ENCODE measurements at regions of chr10 and their contacts with region 1.

Region 1: DNA sequence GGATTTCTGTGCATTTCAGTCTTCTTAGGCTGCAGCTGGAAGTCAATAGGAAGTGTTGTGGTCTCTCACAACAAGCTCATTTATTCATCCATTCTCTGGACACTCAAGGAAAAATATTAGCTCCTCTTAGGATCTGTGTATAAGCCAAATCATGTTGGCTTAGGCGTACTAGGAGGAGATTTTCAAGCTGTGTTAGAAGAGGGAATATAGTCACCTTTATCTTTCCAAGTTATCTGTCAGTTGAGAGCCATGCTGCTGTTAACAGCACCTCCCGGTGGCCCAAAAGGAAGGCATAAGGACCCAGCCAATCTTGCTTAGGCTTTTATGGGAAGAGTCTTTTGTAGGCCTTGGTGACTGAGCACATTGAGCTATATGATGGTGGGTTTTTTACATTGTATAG is 220.0 kb downstream of the LRMDA start:
- DNase-seq: no peak

Region 2: DNA sequence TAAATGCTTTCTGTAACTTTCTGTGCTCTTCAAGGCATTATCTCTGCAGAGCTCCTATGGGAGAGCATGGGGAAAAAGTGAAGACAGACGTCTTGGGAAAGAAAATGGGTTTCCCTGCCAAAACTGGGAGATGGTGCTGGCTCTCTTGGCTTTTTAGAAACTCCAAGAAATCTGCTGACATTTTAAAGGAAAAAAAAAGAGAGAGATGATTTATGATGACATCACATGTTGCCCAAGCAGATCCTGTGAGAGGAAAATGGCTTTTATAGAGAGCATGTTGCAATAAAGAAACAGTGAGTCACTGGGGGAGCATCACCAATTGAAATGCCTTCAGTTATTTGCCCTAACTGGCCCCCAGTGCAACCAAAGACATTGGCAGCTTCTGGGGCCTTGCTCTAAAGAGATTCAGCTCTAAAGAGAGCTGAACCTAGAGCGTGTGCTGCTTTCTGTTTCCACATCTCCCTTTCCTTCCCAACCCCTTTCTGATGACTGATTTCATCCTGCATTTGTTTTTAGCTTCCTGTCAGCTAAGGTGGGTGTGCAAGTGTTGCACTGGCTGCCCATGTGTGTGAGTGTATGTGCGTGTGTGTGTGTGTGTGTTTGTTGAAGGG is 182.3 kb before region 1 on chr10:
- intact Hi-C with region 1: loop called (anchors 10 kb)
- DNase-seq: no peak

Measured in cardiac septum (tissue), 1 donor.